Panc1 (cell line): ENCODE measurements at regions of chr18 and their contacts with region 1.

Region 1: DNA sequence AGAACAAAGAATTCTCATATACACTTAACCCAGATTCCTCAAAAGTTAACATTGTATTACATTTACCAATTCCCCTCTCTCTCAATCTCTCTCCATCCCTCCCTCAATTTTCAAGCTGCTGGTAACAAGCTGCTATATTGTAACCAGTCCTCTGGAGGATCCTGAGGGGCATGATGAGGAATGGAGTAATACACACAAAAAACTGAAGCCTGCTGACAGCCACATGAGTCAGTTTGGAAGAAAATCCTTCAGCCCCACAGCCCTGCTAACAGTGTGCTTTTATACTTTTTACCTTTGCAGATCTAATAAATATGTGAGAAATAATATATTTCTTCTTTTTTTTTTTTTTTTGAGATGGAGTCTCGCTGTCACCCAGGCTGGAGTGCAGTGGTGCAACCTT is 165.7 kb upstream of the RAB12 start:
- DNase-seq: no peak
- ATAC-seq: no peak
- H3K4me3 ChIP-seq: no peak overlapping the region
- H3K27ac ChIP-seq: no peak overlapping the region
- H3K4me1 ChIP-seq: no peaks in the 10 kb centered on the region
- H3K27me3 ChIP-seq: no peaks in the 10 kb centered on the region
- CTCF ChIP-seq: no peak

Region 2: GRCh38 chr18:8389391-8390340 is 53.8 kb before region 1 on chr18:
- CTCF ChIA-PET with region 1: no interaction called
- POLR2A ChIA-PET with region 1: no interaction called
- in situ Hi-C with region 1: no loop called
- intact Hi-C with region 1: loop called (anchors 10 kb)
- DNase-seq: peak; percentile 27
- ATAC-seq: peak; percentile 78; the same call in 1 of the 2 replicates
- H3K4me3 ChIP-seq: no peak overlapping the region
- H3K27ac ChIP-seq: no peak overlapping the region
- H3K4me1 ChIP-seq: no peaks in the 10 kb centered on the region
- H3K27me3 ChIP-seq: no peaks in the 10 kb centered on the region
- CTCF ChIP-seq: peak; percentile 82